Ovary (tissue), 10 donors: ENCODE measurements at regions of chr19 and their contacts with region 1.

Region 1: GRCh38 chr19:40750059-40750873 is at the start of gene ACTMAP:
- DNase-seq: peak; percentile 99 to 100 (median 100)
- H3K4me3 ChIP-seq: peak within 1 kb of the TSS; percentile 55
- H3K27ac ChIP-seq: peak within 1 kb of the TSS; percentile 39 to 86
- H3K4me1 ChIP-seq: peaks cover 18% of the 10 kb centered on the region
- H3K27me3 ChIP-seq: no peaks in the 10 kb centered on the region
- CTCF ChIP-seq: no peak
- EP300 ChIP-seq: peak; percentile 90
- POLR2A ChIP-seq: peak; percentile 84
- total RNA-seq, gene ACTMAP: 2.1 to 6.5 (median 3.7) TPM

Region 2: GRCh38 chr19:40798223-40798996 is 48.1 kb after region 1 on chr19:
- intact Hi-C with region 1: loop called in 2 of 4 experiments (anchors 2 to 5 kb)
- DNase-seq: peak; percentile 100
- H3K4me3 ChIP-seq: peak overlapping the region; percentile 79
- H3K27ac ChIP-seq: peak overlapping the region; percentile 42 to 83
- H3K4me1 ChIP-seq: peaks cover 27% of the 10 kb centered on the region
- H3K27me3 ChIP-seq: no peaks in the 10 kb centered on the region
- CTCF ChIP-seq: peak; percentile 37 to 78 (median 75)
- EP300 ChIP-seq: peak; percentile 77
- POLR2A ChIP-seq: peak; percentile 71

Region 3: GRCh38 chr19:41000310-41000737 is 250.1 kb after region 1 on chr19:
- intact Hi-C with region 1: no loop called
- DNase-seq: no peak
- H3K4me3 ChIP-seq: no peak overlapping the region
- H3K27ac ChIP-seq: no peak overlapping the region
- H3K4me1 ChIP-seq: no peaks in the 10 kb centered on the region
- H3K27me3 ChIP-seq: no peaks in the 10 kb centered on the region
- CTCF ChIP-seq: no peak
- EP300 ChIP-seq: no peak
- POLR2A ChIP-seq: no peak

Region 4: DNA sequence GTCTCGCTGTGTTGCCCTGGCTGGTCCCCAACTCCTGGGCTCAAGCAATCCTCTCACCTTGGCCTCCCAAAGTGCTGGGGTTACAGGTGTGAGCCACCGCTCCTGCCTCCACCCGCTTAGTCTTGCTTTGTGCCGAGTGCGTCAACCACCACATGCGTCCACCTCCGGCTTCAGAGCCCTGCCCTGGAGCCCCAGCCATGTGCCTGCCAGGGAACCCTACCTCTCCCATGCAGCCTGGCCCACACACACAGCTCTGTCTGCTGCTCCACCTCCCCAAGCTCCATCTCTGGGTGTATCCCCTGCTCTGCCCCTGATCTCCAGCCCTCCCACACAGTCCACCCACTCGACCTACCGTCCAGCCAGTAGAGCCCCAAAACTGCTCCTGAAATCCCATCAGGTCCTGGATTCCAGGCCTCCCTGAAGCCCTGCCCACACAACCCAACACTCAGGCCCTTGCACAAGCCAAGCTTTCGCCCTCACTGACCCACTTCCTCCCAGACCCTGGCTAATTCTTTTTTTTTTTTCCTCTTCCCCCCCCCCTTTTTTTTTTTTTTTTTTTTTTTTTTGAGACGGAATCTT is 373.5 kb after region 1 on chr19:
- intact Hi-C with region 1: no loop called
- DNase-seq: no peak
- H3K4me3 ChIP-seq: no peak overlapping the region
- H3K27ac ChIP-seq: no peak overlapping the region
- H3K4me1 ChIP-seq: no peaks in the 10 kb centered on the region
- H3K27me3 ChIP-seq: no peaks in the 10 kb centered on the region
- CTCF ChIP-seq: no peak
- EP300 ChIP-seq: no peak
- POLR2A ChIP-seq: no peak